WTC11 (cell line): ENCODE measurements at regions of chr2 and their contacts with region 1.

Region 1: DNA sequence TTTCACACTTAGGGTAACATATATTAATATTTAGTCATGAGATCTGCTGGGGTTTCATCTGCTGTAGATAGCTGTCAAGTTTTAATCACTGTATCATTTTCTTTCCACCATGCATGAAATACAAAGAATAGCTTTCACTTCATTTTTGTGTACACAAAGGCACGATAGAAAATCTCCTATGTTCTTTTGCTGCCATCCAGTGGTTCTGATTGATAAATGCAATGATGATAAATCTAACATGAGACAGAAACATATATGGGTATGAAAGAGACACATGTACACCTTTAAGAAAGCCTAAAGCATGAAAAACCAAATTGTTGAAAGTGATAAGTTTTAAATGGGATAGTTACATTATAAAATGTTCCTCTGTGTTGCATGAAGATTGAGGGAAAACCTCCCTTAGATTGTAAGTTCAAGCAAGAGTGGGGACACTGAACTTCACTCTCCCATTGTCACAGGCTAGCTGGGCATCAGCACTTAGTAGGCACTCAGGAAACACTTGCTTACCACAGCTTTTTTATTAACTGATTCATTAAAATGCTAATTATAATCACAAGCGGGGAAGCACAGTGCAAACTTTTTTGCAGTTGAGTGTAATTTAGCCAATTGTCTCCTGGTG is 31.2 kb downstream of the C1D start:
- DNase-seq: no peak
- ATAC-seq: 0 out of 2 replicates have a peak, but pooled peaks have one; percentile 26
- H3K4me3 Mint-ChIP-seq: no peak overlapping the region
- H3K27ac Mint-ChIP-seq: no peak overlapping the region
- H3K4me1 Mint-ChIP-seq: peaks cover 2% of the 10 kb centered on the region; the same call in 1 of the 2 replicates
- H3K27me3 Mint-ChIP-seq: no peaks in the 10 kb centered on the region
- CTCF ChIP-seq: peak; percentile 40; the same call in 1 of the 2 replicates

Region 2: DNA sequence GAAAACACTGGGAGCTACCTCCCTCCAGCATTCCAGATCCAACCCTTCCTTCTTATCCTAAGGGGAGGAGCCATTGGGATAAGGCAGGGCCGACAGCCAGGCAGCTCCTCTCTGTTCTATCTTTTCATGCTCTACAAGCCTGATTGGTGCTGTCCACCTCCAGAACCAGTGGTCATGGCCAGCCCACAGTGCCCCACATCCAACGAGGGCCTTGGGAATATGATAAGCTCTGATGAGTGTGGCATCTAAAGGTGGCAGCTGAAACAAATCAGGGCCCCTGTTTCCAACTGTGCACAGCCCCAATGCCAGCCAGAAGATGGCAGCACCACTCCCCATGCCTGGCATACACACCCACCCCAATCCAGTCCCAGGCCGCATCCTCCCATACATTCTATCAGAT is 298.1 kb before region 1 on chr2:
- CTCF ChIA-PET with region 1: interaction called, 35 read pairs
- POLR2A ChIA-PET with region 1: no interaction called
- DNase-seq: peak; percentile 70
- ATAC-seq: peak; percentile 98
- H3K4me3 Mint-ChIP-seq: no peak overlapping the region
- H3K27ac Mint-ChIP-seq: no peak overlapping the region
- H3K4me1 Mint-ChIP-seq: no peaks in the 10 kb centered on the region
- H3K27me3 Mint-ChIP-seq: no peaks in the 10 kb centered on the region
- CTCF ChIP-seq: peak; percentile 41; the same call in 1 of the 2 replicates

Region 3: GRCh38 chr2:67846370-67847070 is 185.1 kb before region 1 on chr2:
- CTCF ChIA-PET with region 1: interaction called, 19 read pairs
- POLR2A ChIA-PET with region 1: no interaction called
- DNase-seq: peak; percentile 72
- ATAC-seq: peak; percentile 88
- H3K4me3 Mint-ChIP-seq: peak overlapping the region; percentile 31
- H3K27ac Mint-ChIP-seq: no peak overlapping the region
- H3K4me1 Mint-ChIP-seq: peaks cover 16% of the 10 kb centered on the region
- H3K27me3 Mint-ChIP-seq: no peaks in the 10 kb centered on the region; the same call in 1 of the 2 replicates
- CTCF ChIP-seq: peak; percentile 52

Region 4: GRCh38 chr2:67854103-67854743 is 177.4 kb before region 1 on chr2:
- CTCF ChIA-PET with region 1: interaction called, 11 read pairs
- POLR2A ChIA-PET with region 1: no interaction called
- DNase-seq: no peak
- ATAC-seq: no peak
- H3K4me3 Mint-ChIP-seq: no peak overlapping the region
- H3K27ac Mint-ChIP-seq: no peak overlapping the region
- H3K4me1 Mint-ChIP-seq: peaks cover 14% of the 10 kb centered on the region
- H3K27me3 Mint-ChIP-seq: no peaks in the 10 kb centered on the region; the same call in 1 of the 2 replicates
- CTCF ChIP-seq: no peak

Region 5: GRCh38 chr2:67895227-67895941 is 136.3 kb before region 1 on chr2:
- CTCF ChIA-PET with region 1: interaction called, 13 read pairs
- POLR2A ChIA-PET with region 1: no interaction called
- DNase-seq: peak; percentile 34
- ATAC-seq: peak; percentile 86
- H3K4me3 Mint-ChIP-seq: no peak overlapping the region; the same call in 1 of the 2 replicates
- H3K27ac Mint-ChIP-seq: no peak overlapping the region; the same call in 1 of the 2 replicates
- H3K4me1 Mint-ChIP-seq: peaks cover 36% of the 10 kb centered on the region
- H3K27me3 Mint-ChIP-seq: peaks cover 65% of the 10 kb centered on the region
- CTCF ChIP-seq: no peak